ENCODE measurements at regions of chr19 and their contacts with region 1.

Region 1: DNA sequence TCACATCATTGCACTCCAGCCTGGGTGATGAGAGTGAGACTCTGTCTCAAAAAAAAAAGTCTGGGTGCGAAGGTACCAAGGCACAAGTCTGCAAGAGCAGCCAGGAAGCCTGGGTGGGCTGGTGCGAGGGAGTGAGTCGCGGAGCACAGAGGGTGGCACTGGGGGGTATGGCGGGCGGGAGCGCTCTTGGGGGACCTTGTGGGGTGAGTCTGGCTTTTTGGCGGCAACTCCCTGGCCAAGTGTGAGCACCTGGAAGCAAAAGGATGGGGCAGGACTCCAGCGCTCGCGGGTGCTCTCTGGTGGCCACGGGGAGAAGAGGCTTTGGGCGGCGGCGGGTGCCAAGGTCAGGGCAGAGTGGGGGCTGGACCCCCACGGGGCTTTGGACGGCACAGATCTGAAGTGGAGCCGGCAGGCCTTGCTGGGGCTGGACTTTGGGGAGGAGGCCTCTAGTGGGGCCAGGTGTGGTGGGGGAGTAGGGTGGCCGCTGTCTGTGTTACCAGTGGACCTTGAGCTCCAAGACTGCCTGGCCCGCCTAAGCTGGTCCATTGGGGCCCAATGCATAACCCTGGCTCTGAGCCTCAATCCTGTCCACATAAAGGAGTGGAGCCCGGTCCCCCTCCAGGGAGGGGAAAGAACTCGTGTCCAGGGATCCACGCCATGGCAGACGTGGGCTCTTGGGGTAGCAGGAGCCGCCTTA is 1.6 kb downstream of the P2RY11 start:
- DNase-seq: peak in 5 of 7 donors; percentile 49 to 76 (median 60)
- H3K4me3 ChIP-seq: no peak overlapping the region
- H3K27ac ChIP-seq: peak overlapping the region in 1 of 5 donors; percentile 42
- H3K4me1 ChIP-seq: no peaks in the 10 kb centered on the region
- H3K27me3 ChIP-seq: no peaks in the 10 kb centered on the region
- CTCF ChIP-seq: peak; percentile 45 to 68 (median 55)
- POLR2A ChIP-seq: no peak

Region 2: DNA sequence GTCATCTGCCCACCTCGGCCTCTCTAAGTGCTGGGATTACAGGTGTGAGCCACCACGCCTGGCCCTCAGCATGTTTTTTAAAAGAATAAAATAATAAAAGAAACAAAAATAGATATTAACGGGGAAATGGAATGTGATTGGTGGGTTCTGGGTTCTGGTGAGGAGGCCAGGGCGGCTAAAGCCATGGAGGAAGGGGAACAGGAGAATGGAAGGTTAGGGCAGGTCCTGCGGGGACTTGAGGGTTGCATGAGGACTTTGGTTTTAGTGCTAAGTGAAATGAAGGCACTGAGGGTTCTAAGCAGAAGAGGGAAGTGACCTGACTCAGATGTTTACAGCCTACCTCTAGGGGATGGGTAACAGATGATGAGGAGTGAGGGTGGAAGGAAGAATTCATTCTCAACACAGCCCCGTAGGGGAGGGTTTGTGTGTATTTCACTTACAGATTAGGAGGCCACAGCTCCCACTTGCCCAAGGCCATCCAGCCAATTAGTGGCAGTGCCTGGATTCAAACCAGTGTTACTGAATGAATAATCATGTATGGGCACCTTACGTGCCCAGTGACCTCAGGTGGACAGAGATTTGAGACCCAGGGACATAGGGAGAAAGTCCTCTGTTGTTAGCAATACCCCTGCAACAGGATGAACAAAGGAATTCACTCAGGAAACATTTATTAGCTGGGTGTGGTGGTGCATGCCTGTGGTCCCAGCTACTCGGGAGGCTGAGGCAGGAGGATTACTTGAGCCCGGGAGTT is 132.3 kb after region 1 on chr19:
- intact Hi-C with region 1: loop called in 1 of 2 experiments (anchors 10 kb)
- DNase-seq: no peak
- H3K4me3 ChIP-seq: no peak overlapping the region
- H3K27ac ChIP-seq: no peak overlapping the region
- H3K4me1 ChIP-seq: peaks cover 0 to 3% of the 10 kb centered on the region in 2 donors
- H3K27me3 ChIP-seq: no peaks in the 10 kb centered on the region
- CTCF ChIP-seq: no peak
- POLR2A ChIP-seq: no peak

Measured in adrenal gland (tissue), 19 donors.